ENCODE measurements at regions of chr2 and their contacts with region 1.

Region 1: DNA sequence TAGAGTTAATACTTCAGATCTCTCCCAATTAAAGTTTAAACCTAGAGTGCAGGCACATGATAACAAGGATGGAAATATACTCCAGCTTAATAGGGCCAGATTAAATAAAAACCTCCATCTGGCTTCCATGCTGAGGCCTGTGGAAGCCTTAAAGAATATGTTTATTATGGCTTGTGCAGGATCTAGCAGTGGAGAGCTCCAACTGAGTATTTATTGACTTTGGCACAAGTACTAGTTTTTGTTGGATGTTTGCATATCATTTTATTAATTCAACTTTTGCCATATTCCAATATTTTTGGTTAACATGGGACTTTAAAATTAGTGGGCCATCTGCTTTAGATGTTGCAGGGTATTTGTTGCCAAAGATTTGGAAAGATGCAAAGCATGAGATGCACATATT is 860.4 kb upstream of the SOX11 start:
- DNase-seq: no peak
- H3K4me3 Mint-ChIP-seq: no peak overlapping the region
- H3K27ac Mint-ChIP-seq: no peak overlapping the region
- H3K4me1 Mint-ChIP-seq: no peaks in the 10 kb centered on the region
- H3K27me3 Mint-ChIP-seq: no peaks in the 10 kb centered on the region
- CTCF ChIP-seq: no peak

Region 2: GRCh38 chr2:4732560-4732959 is 99.2 kb before region 1 on chr2:
- CTCF ChIA-PET with region 1: no interaction called
- intact Hi-C with region 1: no loop called
- DNase-seq: no peak
- H3K4me3 Mint-ChIP-seq: no peak overlapping the region
- H3K27ac Mint-ChIP-seq: no peak overlapping the region
- H3K4me1 Mint-ChIP-seq: no peaks in the 10 kb centered on the region
- H3K27me3 Mint-ChIP-seq: no peaks in the 10 kb centered on the region
- CTCF ChIP-seq: no peak

Region 3: DNA sequence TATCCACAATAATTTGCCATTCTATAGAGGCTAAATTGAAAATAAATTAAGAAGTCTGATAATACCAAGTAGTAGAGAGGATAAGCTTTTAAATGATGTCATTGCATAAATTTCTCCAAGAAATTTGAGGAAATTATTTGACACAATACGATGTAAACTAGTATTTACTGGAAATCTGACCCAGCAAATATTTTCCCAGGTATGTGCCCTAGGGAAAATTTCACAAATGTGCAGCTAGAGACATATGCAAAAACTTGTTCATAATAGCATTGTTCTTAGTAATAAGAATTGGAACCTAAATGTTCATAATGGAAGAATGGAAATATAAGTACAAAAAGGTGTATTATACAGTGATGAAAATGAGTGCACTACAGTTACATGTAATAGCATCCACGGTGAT is 28.4 kb before region 1 on chr2:
- CTCF ChIA-PET with region 1: no interaction called
- intact Hi-C with region 1: loop called (anchors 1 kb)
- DNase-seq: no peak
- H3K4me3 Mint-ChIP-seq: no peak overlapping the region
- H3K27ac Mint-ChIP-seq: no peak overlapping the region
- H3K4me1 Mint-ChIP-seq: no peaks in the 10 kb centered on the region
- H3K27me3 Mint-ChIP-seq: no peaks in the 10 kb centered on the region
- CTCF ChIP-seq: no peak

Region 4: GRCh38 chr2:4937551-4937950 is 105.8 kb after region 1 on chr2:
- CTCF ChIA-PET with region 1: no interaction called
- intact Hi-C with region 1: no loop called
- DNase-seq: no peak
- H3K4me3 Mint-ChIP-seq: no peak overlapping the region
- H3K27ac Mint-ChIP-seq: no peak overlapping the region
- H3K4me1 Mint-ChIP-seq: no peaks in the 10 kb centered on the region
- H3K27me3 Mint-ChIP-seq: no peaks in the 10 kb centered on the region
- CTCF ChIP-seq: no peak